Common myeloid progenitor, CD34-positive (primary cell): ENCODE measurements at regions of chr2 and their contacts with region 1.

Region 1: DNA sequence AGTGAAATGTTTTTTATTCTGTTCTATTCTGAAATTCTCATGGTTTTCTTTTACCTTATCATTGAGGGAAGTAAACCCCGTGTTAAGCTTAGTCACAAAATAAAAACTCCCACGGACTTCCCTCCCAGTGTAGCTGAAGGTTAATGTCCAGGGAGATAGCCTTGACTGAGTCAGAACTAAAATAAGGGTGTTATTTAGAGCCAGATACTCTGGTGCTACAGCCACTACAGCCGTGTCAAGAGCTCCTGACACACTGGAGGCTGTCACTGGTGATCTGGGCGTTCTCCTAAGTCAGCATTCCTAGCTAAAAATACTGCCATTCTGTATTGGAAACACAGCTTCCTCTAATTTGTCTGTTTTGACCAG is 82.0 kb upstream of the RANBP2 start:
- DNase-seq: peak in 2 of 3 donors; percentile 61 to 76
- H3K4me3 ChIP-seq: peak overlapping the region in 3 of 7 experiments; percentile 6 to 42 (median 31)
- H3K27ac ChIP-seq: peak overlapping the region; percentile 65 to 75
- H3K4me1 ChIP-seq: peaks cover 38 to 83% (median 70%) of the 10 kb centered on the region in 4 experiments
- H3K27me3 ChIP-seq: no peaks in the 10 kb centered on the region

Region 2: GRCh38 chr2:108583903-108584520 is 53.3 kb before region 1 on chr2:
- CTCF ChIA-PET with region 1: interaction called, 19 read pairs
- POLR2A ChIA-PET with region 1: no interaction called
- DNase-seq: peak; percentile 77 to 88 (median 85)
- H3K4me3 ChIP-seq: peak overlapping the region in 4 of 7 experiments; percentile 6 to 71 (median 28)
- H3K27ac ChIP-seq: no peak overlapping the region
- H3K4me1 ChIP-seq: peaks cover 24 to 57% (median 39%) of the 10 kb centered on the region in 4 experiments
- H3K27me3 ChIP-seq: no peaks in the 10 kb centered on the region

Region 3: DNA sequence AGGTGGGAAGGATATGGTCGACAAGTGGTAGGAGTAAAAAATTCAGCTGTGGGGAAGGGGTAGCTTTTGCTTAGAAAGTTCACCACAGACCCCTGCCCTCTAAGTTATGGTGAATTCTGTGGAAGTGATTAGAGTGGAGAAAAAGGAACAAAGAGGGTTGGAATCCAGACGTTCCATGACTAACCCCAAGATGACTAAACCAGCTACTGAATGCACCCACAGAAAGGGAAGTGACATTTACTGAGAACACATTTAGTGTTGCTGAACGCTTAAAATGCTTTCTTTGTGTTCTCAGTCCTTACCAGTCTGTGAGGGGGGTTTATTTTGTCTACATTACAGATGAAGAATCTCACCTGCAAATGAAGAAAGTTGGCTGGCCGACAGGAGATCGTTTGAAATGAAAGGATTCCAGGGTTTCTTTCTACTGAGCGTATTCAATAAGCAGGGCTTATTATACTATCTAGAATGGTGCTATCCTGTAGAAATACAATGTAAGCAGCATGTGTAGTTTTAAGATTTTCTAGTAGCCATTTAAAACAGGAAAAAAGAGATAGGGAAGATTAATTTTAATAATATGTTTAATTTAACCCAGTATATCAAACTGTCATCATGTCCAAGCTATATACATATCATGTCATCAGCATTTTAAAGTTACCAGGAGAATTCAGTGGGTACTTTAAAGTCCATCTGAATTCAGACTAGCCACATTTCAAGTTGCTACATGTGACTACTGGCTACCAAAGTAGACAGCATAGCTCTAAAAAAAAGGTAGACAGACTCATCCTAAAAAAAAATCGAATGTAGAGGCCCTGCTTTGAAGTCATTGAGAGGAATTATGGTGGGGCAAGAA is 42.9 kb before region 1 on chr2:
- CTCF ChIA-PET with region 1: interaction called, 49 read pairs
- POLR2A ChIA-PET with region 1: interaction called, 4 read pairs
- DNase-seq: peak; percentile 81 to 96 (median 93)
- H3K4me3 ChIP-seq: peak overlapping the region in 6 of 7 experiments; percentile 14 to 62 (median 44)
- H3K27ac ChIP-seq: peak overlapping the region; percentile 76 to 90
- H3K4me1 ChIP-seq: peaks cover 41 to 76% (median 64%) of the 10 kb centered on the region in 4 experiments
- H3K27me3 ChIP-seq: no peaks in the 10 kb centered on the region

Region 4: GRCh38 chr2:108607706-108608301 is 29.5 kb before region 1 on chr2:
- CTCF ChIA-PET with region 1: interaction called, 601 read pairs
- POLR2A ChIA-PET with region 1: interaction called, 10 read pairs
- DNase-seq: peak; percentile 64 to 84 (median 81)
- H3K4me3 ChIP-seq: no peak overlapping the region
- H3K27ac ChIP-seq: no peak overlapping the region
- H3K4me1 ChIP-seq: peaks cover 5 to 75% (median 48%) of the 10 kb centered on the region in 4 experiments
- H3K27me3 ChIP-seq: no peaks in the 10 kb centered on the region

Region 5: GRCh38 chr2:108621087-108621559 is 16.2 kb before region 1 on chr2:
- CTCF ChIA-PET with region 1: interaction called, 601 read pairs
- POLR2A ChIA-PET with region 1: interaction called, 3 read pairs
- DNase-seq: peak; percentile 67 to 94 (median 89)
- H3K4me3 ChIP-seq: peak overlapping the region in 5 of 7 experiments; percentile 50 to 67 (median 54)
- H3K27ac ChIP-seq: peak overlapping the region; percentile 48 to 80
- H3K4me1 ChIP-seq: peaks cover 46 to 94% (median 74%) of the 10 kb centered on the region in 4 experiments
- H3K27me3 ChIP-seq: no peaks in the 10 kb centered on the region